ENCODE measurements at regions of chr18 and their contacts with region 1.

Region 1: GRCh38 chr18:34242740-34243139 is 18.0 kb upstream of the NOL4 start:
- DNase-seq: no peak
- CTCF ChIP-seq: no peak

Region 2: DNA sequence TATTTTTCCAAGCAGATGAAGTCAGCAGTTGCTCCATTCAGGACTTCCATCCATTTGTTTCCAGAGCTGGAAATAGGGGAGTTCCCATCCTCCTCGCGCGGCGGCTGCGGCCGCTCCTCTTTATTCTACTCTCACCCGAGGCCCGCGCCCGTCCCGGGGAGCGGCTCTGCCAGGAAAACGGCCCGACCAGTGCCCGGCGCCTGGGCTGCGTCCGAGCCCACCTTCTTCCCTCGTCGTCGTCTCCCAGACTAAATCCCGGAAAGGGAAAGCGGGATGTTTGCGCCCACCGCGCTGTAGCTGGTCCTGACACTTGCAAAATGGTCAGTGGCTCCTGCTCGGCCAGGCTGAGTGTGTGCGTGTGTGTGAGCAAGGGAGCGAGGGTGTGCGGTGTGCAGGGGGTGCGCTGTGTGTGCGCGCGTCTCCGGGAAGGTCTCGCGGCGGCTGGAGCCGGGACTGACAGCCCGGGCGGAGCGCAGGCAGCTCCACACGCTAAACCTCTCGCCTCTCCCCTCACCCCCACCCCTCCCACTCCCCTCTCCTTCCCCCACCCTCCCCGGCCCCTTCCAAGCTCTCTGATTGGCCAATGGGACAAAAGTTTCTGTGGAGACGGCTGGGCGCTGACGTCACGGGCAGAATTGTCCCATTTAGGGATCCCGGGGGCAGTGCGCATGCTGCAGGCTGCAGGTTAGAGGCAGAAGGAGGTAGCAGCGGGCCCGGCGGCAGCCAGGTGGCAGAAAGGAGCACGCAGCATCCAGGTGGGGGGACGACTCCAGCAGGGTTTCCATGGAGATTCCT is 18.1 kb before region 1 on chr18 and contains the start of gene NOL4:
- CTCF ChIA-PET with region 1: interaction called, 11 read pairs
- POLR2A ChIA-PET with region 1: no interaction called
- DNase-seq: peak; percentile 22
- CTCF ChIP-seq: peak; percentile 43